ENCODE measurements at regions of chr2 and their contacts with region 1.

Region 1: GRCh38 chr2:64523666-64524603 is at the start of gene AFTPH:
- DNase-seq: peak; percentile 99 to 100 (median 100)
- H3K4me3 ChIP-seq: peak within 1 kb of the TSS; percentile 89 to 100 (median 99)
- H3K27ac ChIP-seq: peak within 1 kb of the TSS; percentile 97
- H3K4me1 ChIP-seq: peaks cover 17 to 43% (median 21%) of the 10 kb centered on the region in 4 experiments
- H3K27me3 ChIP-seq: no peaks in the 10 kb centered on the region

Region 2: DNA sequence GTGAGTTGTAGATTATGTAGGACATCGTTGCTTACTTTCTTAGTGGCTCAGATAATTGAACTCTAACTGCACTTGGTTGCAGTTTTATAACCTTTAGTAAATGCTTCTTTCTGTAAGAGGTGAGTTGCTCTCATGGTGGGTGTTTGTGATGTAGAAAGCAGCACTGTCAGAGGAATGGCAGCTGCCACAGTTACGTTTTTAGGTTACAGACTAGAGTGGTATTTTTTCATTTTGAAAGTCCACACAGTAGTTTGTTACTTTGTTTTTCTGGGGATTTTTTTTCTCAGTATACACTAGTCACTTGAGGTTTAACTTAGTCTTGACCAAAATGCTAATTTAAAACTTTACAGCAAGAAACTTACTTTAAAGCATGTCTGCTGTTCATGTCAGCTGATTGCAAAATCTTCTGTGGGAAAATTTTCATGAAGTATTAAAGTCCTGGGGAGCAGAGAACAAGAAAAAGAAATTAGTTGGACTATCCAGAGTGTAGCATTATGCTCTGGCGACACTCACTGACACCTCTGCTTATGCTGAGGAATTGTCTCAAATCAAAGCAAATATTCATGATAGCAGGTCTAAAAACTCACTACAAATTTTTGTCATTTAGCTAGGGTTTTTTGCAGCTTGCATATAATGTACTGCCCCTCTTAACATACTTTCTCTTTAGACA is 15.0 kb after region 1 on chr2:
- CTCF ChIA-PET with region 1: interaction called, 11 read pairs
- POLR2A ChIA-PET with region 1: interaction called, 4 read pairs
- DNase-seq: no peak
- H3K4me3 ChIP-seq: no peak overlapping the region
- H3K27ac ChIP-seq: no peak overlapping the region
- H3K4me1 ChIP-seq: peaks cover 0 to 8% (median 2%) of the 10 kb centered on the region in 4 experiments
- H3K27me3 ChIP-seq: no peaks in the 10 kb centered on the region

Region 3: GRCh38 chr2:64548761-64549160 is 24.8 kb after region 1 on chr2:
- CTCF ChIA-PET with region 1: interaction called, 16 read pairs
- POLR2A ChIA-PET with region 1: no interaction called
- DNase-seq: no peak
- H3K4me3 ChIP-seq: no peak overlapping the region
- H3K27ac ChIP-seq: no peak overlapping the region
- H3K4me1 ChIP-seq: peaks cover 0 to 7% (median 1%) of the 10 kb centered on the region in 4 experiments
- H3K27me3 ChIP-seq: no peaks in the 10 kb centered on the region